Endothelial cell of umbilical vein (primary cell): ENCODE measurements at regions of chr5 and their contacts with region 1.

Region 1: GRCh38 chr5:170896779-170897178 is 35.0 kb downstream of the RANBP17 start:
- DNase-seq: peak; percentile 9
- H3K4me3 ChIP-seq: no peak overlapping the region
- H3K27ac ChIP-seq: no peak overlapping the region
- H3K4me1 ChIP-seq: peaks cover 6% of the 10 kb centered on the region
- H3K27me3 ChIP-seq: no peaks in the 10 kb centered on the region
- CTCF ChIP-seq: peak; percentile 49 to 63
- POLR2A ChIP-seq: no peak

Region 2: GRCh38 chr5:170638454-170639220 is 258.1 kb before region 1 on chr5:
- CTCF ChIA-PET with region 1: no interaction called
- POLR2A ChIA-PET with region 1: no interaction called
- dilution Hi-C with region 1: no loop called
- intact Hi-C with region 1: loop called (anchors 1 kb)
- DNase-seq: peak; percentile 44
- H3K4me3 ChIP-seq: no peak overlapping the region
- H3K27ac ChIP-seq: no peak overlapping the region
- H3K4me1 ChIP-seq: peaks cover 14% of the 10 kb centered on the region
- H3K27me3 ChIP-seq: peaks cover 2 to 5% of the 10 kb centered on the region in 2 experiments
- CTCF ChIP-seq: peak; percentile 79 to 83
- POLR2A ChIP-seq: no peak

Region 3: GRCh38 chr5:170791325-170791954 is 105.3 kb before region 1 on chr5:
- CTCF ChIA-PET with region 1: interaction called, 21 read pairs
- POLR2A ChIA-PET with region 1: no interaction called
- dilution Hi-C with region 1: no loop called
- intact Hi-C with region 1: loop called (anchors 2 kb)
- DNase-seq: peak; percentile 66
- H3K4me3 ChIP-seq: no peak overlapping the region
- H3K27ac ChIP-seq: no peak overlapping the region
- H3K4me1 ChIP-seq: no peaks in the 10 kb centered on the region
- H3K27me3 ChIP-seq: no peaks in the 10 kb centered on the region
- CTCF ChIP-seq: peak; percentile 64 to 69
- POLR2A ChIP-seq: no peak

Region 4: DNA sequence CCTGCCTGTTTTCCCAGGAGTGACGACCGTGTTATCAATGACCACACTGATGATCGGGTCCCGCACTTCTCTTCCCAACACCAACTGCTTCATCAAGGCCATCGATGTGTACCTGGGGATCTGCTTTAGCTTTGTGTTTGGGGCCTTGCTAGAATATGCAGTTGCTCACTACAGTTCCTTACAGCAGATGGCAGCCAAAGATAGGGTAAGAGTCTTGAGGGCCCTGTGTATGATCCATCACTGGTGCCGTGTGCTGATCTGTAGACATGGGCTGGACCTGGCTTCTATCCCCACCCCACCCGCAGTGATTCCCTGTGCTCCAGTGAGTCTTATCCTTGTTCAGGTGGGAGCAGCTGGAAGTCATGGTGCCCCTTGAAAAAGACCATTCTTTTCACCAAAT is 87.2 kb before region 1 on chr5:
- CTCF ChIA-PET with region 1: interaction called, 19 read pairs
- POLR2A ChIA-PET with region 1: interaction called, 4 read pairs
- dilution Hi-C with region 1: no loop called
- intact Hi-C with region 1: loop called (anchors 1 kb)
- DNase-seq: peak; percentile 48
- H3K4me3 ChIP-seq: no peak overlapping the region
- H3K27ac ChIP-seq: no peak overlapping the region
- H3K4me1 ChIP-seq: no peaks in the 10 kb centered on the region
- H3K27me3 ChIP-seq: no peaks in the 10 kb centered on the region
- CTCF ChIP-seq: peak; percentile 14 to 37
- POLR2A ChIP-seq: no peak

Region 5: GRCh38 chr5:170861837-170862766 is 34.7 kb before region 1 on chr5 and contains the start of gene RANBP17:
- CTCF ChIA-PET with region 1: interaction called, 3 read pairs
- POLR2A ChIA-PET with region 1: no interaction called
- dilution Hi-C with region 1: no loop called
- intact Hi-C with region 1: loop called (anchors 2 kb)
- DNase-seq: peak; percentile 66
- H3K4me3 ChIP-seq: peak within 1 kb of the TSS; percentile 33 to 90 (median 60)
- H3K27ac ChIP-seq: peak within 1 kb of the TSS; percentile 15
- H3K4me1 ChIP-seq: peaks cover 5% of the 10 kb centered on the region
- H3K27me3 ChIP-seq: no peaks in the 10 kb centered on the region
- CTCF ChIP-seq: no peak
- POLR2A ChIP-seq: peak; percentile 58
- total RNA-seq, gene RANBP17: 13.6 and 17.1 TPM in 2 replicates

Region 6: DNA sequence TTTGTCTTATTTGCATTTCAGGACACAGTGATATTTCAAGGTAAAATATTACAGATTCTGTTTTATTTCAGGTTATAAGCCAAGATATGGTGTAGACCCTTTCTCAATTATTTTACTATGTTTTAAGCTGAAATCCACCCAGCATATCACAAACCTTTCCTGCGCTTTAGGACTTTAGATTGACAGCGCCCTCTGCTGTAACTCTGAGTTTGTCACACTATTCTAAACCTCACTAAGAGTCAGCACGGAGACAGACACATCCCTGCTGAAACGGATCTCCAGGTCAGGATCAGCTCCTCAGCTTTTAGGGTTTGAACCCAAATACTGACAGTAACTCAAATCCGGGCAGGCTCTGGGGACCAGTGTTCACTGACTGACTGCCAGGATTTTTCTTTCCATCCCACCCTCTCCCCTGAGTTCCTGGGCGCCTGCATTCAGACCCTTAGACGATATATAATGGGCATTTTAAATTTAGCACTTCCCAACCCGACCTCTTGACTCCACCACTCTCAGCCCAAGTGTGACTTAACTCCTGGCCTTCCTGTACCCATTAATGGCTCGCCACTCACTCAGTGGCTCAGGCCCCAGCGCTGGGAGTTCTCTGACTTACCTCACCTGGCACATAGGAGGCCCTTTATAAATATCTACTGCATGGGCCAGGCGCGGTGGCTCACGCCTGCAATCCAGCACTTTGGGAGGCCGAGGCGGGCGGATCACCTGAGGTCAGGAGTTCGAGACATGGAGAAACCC is 445.8 kb after region 1 on chr5:
- CTCF ChIA-PET with region 1: no interaction called
- POLR2A ChIA-PET with region 1: no interaction called
- dilution Hi-C with region 1: no loop called
- intact Hi-C with region 1: loop called (anchors 2 kb)
- DNase-seq: peak; percentile 64
- H3K4me3 ChIP-seq: no peak overlapping the region
- H3K27ac ChIP-seq: no peak overlapping the region
- H3K4me1 ChIP-seq: no peaks in the 10 kb centered on the region
- H3K27me3 ChIP-seq: no peaks in the 10 kb centered on the region
- CTCF ChIP-seq: peak; percentile 57 to 61
- POLR2A ChIP-seq: no peak